CD8-positive, alpha-beta T cell (primary cell): ENCODE measurements at regions of chr12 and their contacts with region 1.

Region 1: DNA sequence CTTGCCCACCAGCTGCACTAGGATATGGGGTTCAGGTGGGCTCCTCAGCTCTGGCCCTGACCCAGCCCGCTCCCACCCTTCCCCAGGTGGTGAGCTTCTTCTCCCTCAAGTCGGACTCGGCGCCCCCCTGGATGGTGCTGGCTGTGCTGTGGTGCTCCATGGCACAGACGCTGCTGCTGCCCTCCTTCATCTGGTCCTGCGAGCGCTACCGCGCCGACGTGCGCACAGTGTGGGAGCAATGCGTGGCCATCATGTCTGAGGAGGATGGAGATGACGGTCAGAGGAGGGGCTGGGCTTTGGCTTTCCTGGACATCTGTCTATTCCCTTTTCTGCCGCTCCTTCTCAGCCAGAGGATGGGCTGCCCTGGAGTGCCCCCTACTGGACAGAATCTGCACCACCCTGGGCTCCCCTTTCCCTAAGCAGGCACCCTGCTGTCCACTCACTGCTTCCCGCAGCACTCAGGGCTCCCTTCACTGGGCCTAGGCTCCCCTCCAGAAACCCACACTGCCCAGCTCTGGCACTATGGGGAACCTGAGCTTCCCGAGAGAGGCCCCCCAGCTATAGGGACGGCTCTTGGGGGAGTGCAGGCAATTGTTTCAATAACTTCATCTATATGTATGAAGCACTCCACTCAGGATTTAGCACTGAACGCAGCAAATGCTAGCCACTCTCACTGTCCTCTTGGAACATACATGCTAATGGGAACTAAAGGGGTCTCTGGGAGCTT is 2.6 kb upstream of the P3H3 start:
- DNase-seq: peak; percentile 59 to 86 (median 79)
- ATAC-seq: peak; percentile 63
- H3K4me3 ChIP-seq: no peak overlapping the region
- H3K4me3 Mint-ChIP-seq: peak overlapping the region; percentile 5
- H3K27ac ChIP-seq: no peak overlapping the region
- H3K27ac Mint-ChIP-seq: no peak overlapping the region
- H3K4me1 ChIP-seq: peaks cover 13% of the 10 kb centered on the region
- H3K4me1 Mint-ChIP-seq: peaks cover 32% of the 10 kb centered on the region
- H3K27me3 ChIP-seq: peaks cover 10 to 45% of the 10 kb centered on the region in 2 experiments
- H3K27me3 Mint-ChIP-seq: peaks cover 48% of the 10 kb centered on the region
- CTCF ChIP-seq: peak; percentile 71

Region 2: GRCh38 chr12:6563448-6564050 is 262.0 kb before region 1 on chr12:
- CTCF ChIA-PET with region 1: no interaction called
- POLR2A ChIA-PET with region 1: no interaction called
- intact Hi-C with region 1: loop called (anchors 5 kb)
- DNase-seq: peak; percentile 39 to 82 (median 73)
- ATAC-seq: peak; percentile 27
- H3K4me3 ChIP-seq: no peak overlapping the region
- H3K4me3 Mint-ChIP-seq: no peak overlapping the region
- H3K27ac ChIP-seq: no peak overlapping the region
- H3K27ac Mint-ChIP-seq: peak overlapping the region; percentile 78
- H3K4me1 ChIP-seq: peaks cover 18% of the 10 kb centered on the region
- H3K4me1 Mint-ChIP-seq: peaks cover 42% of the 10 kb centered on the region
- H3K27me3 ChIP-seq: no peaks in the 10 kb centered on the region
- H3K27me3 Mint-ChIP-seq: no peaks in the 10 kb centered on the region
- CTCF ChIP-seq: peak; percentile 71

Region 3: DNA sequence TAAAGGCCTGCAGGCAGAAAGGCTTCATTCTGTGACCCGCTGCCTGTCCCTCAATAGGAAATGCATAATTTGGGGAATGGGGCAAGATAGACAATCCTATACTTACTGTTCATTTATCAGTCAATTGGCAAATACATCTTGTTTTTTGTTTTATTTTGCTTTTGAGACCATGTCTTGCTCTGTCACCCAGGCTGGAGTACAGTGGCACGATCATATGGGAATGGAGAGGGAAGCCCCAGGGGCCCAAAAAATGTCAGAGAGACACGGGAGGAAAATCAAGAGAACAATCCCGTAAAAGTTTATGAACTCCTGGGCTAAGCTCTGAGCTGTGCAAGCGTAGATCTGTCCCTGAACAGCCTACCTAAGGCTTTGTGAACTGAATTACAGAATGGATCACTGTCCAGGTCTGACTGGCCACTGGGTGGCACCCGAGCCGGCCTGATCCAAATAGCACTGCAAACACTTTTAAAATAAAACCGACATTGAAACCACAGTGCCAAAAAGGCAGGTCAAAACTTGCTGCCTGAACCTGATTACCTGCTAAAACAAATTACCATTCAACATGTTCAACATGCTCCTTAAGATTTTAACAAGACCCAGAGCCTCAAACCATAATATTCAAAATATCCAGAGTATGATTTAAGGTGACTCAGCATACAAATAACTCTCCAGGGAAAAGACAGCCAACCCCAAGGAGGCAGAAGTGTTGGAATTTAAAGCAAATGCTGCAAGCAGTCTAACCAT is 89.9 kb before region 1 on chr12:
- CTCF ChIA-PET with region 1: interaction called, 8 read pairs
- POLR2A ChIA-PET with region 1: no interaction called
- intact Hi-C with region 1: loop called in 1 of 2 experiments (anchors 1 kb)
- DNase-seq: peak in 7 of 9 experiments; percentile 26 to 56 (median 33)
- ATAC-seq: no peak
- H3K4me3 ChIP-seq: no peak overlapping the region
- H3K4me3 Mint-ChIP-seq: no peak overlapping the region
- H3K27ac ChIP-seq: no peak overlapping the region
- H3K27ac Mint-ChIP-seq: peak overlapping the region; percentile 64
- H3K4me1 ChIP-seq: no peaks in the 10 kb centered on the region
- H3K4me1 Mint-ChIP-seq: no peaks in the 10 kb centered on the region
- H3K27me3 ChIP-seq: no peaks in the 10 kb centered on the region
- H3K27me3 Mint-ChIP-seq: no peaks in the 10 kb centered on the region
- CTCF ChIP-seq: no peak

Region 4: GRCh38 chr12:6792522-6793201 is 32.9 kb before region 1 on chr12:
- CTCF ChIA-PET with region 1: interaction called, 13 read pairs
- POLR2A ChIA-PET with region 1: interaction called, 3 read pairs
- intact Hi-C with region 1: no loop called
- DNase-seq: peak in 8 of 9 experiments; percentile 18 to 70 (median 43)
- ATAC-seq: peak; percentile 93
- H3K4me3 ChIP-seq: peak overlapping the region in 1 of 2 experiments; percentile 25
- H3K4me3 Mint-ChIP-seq: peak overlapping the region; percentile 42
- H3K27ac ChIP-seq: no peak overlapping the region
- H3K27ac Mint-ChIP-seq: peak overlapping the region; percentile 22
- H3K4me1 ChIP-seq: peaks cover 27% of the 10 kb centered on the region
- H3K4me1 Mint-ChIP-seq: peaks cover 33% of the 10 kb centered on the region
- H3K27me3 ChIP-seq: no peaks in the 10 kb centered on the region
- H3K27me3 Mint-ChIP-seq: peaks cover 4% of the 10 kb centered on the region
- CTCF ChIP-seq: no peak

Region 5: DNA sequence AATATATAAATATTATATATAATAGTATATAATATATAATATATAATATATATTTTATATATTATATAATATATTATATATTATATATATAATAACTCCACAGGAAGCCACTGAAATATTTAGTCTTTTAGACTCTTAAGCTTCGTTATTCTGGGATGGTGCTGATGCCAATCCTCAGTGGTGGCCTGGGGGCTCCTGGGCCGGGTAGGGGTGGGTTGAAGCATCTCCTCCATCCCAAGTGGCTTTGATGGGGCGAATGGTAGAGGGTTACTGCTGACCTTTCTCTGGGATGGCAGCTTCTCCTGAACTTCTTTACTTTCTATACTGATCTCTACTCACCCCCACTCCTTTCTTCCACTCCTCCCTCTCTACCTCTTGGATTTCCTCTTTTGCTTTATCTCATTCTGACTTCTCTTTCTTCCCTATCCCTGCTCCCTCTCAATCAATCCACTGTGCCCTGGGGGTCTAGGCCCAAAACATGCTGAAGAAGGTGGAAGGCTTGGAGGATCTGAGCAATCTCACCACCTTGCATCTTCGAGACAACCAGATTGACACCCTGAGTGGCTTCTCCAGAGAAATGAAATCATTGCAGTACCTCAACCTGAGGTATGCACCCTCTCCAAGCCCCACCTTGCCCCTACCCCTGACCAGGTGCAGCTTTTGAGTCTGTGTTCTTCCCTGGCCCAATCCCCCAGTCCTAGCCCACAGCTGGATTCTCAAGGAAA is 84.0 kb after region 1 on chr12:
- CTCF ChIA-PET with region 1: no interaction called
- POLR2A ChIA-PET with region 1: no interaction called
- intact Hi-C with region 1: no loop called
- DNase-seq: no peak
- ATAC-seq: no peak
- H3K4me3 ChIP-seq: no peak overlapping the region
- H3K4me3 Mint-ChIP-seq: no peak overlapping the region
- H3K27ac ChIP-seq: no peak overlapping the region
- H3K27ac Mint-ChIP-seq: no peak overlapping the region
- H3K4me1 ChIP-seq: peaks cover 19% of the 10 kb centered on the region
- H3K4me1 Mint-ChIP-seq: peaks cover 16% of the 10 kb centered on the region
- H3K27me3 ChIP-seq: no peaks in the 10 kb centered on the region
- H3K27me3 Mint-ChIP-seq: no peaks in the 10 kb centered on the region
- CTCF ChIP-seq: no peak

Region 6: DNA sequence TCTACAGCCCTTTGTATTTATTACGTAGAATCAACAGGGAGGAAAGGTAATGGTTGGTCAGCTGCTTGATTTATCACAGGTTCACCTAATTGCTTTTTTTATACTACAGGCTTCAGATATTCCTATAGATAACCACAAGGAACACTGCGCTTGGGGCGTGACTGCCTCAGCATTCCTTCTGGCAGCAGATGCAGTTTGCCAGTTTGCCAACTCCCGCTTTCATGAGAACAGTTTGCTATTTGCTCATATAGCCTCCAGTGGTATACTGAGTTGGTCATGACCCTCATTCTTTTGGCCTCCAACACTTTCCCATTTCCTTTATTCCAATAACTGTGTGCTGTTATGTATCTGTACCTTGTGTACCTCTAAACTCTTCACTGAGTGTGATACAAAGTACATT is 439.7 kb after region 1 on chr12:
- CTCF ChIA-PET with region 1: no interaction called
- POLR2A ChIA-PET with region 1: no interaction called
- intact Hi-C with region 1: no loop called
- DNase-seq: no peak
- ATAC-seq: no peak
- H3K4me3 ChIP-seq: no peak overlapping the region
- H3K4me3 Mint-ChIP-seq: no peak overlapping the region
- H3K27ac ChIP-seq: no peak overlapping the region
- H3K27ac Mint-ChIP-seq: no peak overlapping the region
- H3K4me1 ChIP-seq: no peaks in the 10 kb centered on the region
- H3K4me1 Mint-ChIP-seq: no peaks in the 10 kb centered on the region
- H3K27me3 ChIP-seq: no peaks in the 10 kb centered on the region
- H3K27me3 Mint-ChIP-seq: peaks cover 2% of the 10 kb centered on the region
- CTCF ChIP-seq: no peak

Region 7: DNA sequence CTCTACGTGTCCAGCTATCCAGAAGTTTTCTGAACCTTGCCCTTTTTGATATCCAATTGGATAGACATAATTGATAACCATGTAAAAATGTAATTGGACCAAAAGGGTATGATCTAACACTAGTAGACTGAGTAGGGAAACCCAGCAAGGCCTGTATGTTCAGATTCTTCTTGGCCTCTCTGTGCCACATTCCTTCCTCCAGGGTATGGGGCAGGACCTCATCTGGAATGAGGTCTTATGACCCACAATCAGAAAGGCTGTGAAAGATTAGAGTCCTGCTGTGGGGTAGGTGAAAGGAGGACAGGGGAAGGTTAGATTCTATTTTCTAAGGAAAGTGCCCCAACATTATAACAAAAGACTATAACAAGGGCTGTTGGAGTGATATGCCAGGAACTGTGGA is 1945.5 kb after region 1 on chr12:
- CTCF ChIA-PET with region 1: no interaction called
- POLR2A ChIA-PET with region 1: no interaction called
- intact Hi-C with region 1: no loop called
- DNase-seq: no peak
- ATAC-seq: no peak
- H3K4me3 ChIP-seq: no peak overlapping the region
- H3K4me3 Mint-ChIP-seq: no peak overlapping the region
- H3K27ac ChIP-seq: no peak overlapping the region
- H3K27ac Mint-ChIP-seq: no peak overlapping the region
- H3K4me1 ChIP-seq: no peaks in the 10 kb centered on the region
- H3K4me1 Mint-ChIP-seq: no peaks in the 10 kb centered on the region
- H3K27me3 ChIP-seq: no peaks in the 10 kb centered on the region
- H3K27me3 Mint-ChIP-seq: no peaks in the 10 kb centered on the region
- CTCF ChIP-seq: no peak